A549 (cell line): ENCODE measurements at regions of chr11 and their contacts with region 1.

Region 1: GRCh38 chr11:111454561-111455192 is 57.5 kb downstream of the BTG4 start:
- DNase-seq: peak; percentile 45 to 59
- ATAC-seq: peak; percentile 62 to 89; a peak in 5 of 6 replicates
- H3K4me3 ChIP-seq: no peak overlapping the region
- H3K27ac ChIP-seq: peak overlapping the region in 1 of 2 experiments; percentile 63; a peak in 3 of 6 replicates
- H3K4me1 ChIP-seq: no peaks in the 10 kb centered on the region
- CTCF ChIP-seq: peak; percentile 59
- EP300 ChIP-seq: no peak
- POLR2A ChIP-seq: no peak
- RAD21 ChIP-seq: peak; percentile 57 to 71

Region 2: DNA sequence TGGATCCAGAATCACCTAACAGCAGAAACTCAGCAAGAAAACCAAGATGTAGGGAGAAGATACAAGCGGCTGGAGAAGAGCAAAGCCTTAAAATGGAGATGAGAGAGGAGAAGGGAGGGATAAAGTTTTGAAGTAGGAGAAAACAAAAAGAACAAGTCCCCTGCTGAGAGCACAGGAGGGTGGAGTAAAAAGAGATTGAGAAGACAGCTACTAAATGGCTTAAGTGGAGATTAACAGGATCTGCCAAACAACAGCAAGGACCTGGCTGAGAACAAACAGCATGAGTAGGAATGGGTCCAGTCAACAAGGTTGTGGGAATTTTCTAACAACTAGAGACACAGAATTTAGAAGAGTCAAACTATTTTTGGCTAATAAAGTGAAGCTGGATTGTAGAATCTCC is 39.4 kb after region 1 on chr11:
- CTCF ChIA-PET with region 1: no interaction called
- POLR2A ChIA-PET with region 1: no interaction called
- DNase-seq: no peak
- ATAC-seq: no peak
- H3K4me3 ChIP-seq: no peak overlapping the region
- H3K27ac ChIP-seq: no peak overlapping the region
- H3K4me1 ChIP-seq: no peaks in the 10 kb centered on the region
- CTCF ChIP-seq: no peak
- EP300 ChIP-seq: no peak
- POLR2A ChIP-seq: no peak
- RAD21 ChIP-seq: no peak

Region 3: GRCh38 chr11:111566324-111566723 is 111.6 kb after region 1 on chr11:
- CTCF ChIA-PET with region 1: interaction called, 11 read pairs
- POLR2A ChIA-PET with region 1: no interaction called
- DNase-seq: no peak
- ATAC-seq: no peak
- H3K4me3 ChIP-seq: no peak overlapping the region
- H3K27ac ChIP-seq: no peak overlapping the region
- H3K4me1 ChIP-seq: peaks cover 19% of the 10 kb centered on the region
- CTCF ChIP-seq: no peak
- EP300 ChIP-seq: no peak
- POLR2A ChIP-seq: no peak
- RAD21 ChIP-seq: no peak